ENCODE measurements at regions of chr2 and their contacts with region 1.

Region 1: GRCh38 chr2:25756536-25756935 is 83.2 kb upstream of the DTNB start:
- DNase-seq: no peak
- H3K4me3 Mint-ChIP-seq: no peak overlapping the region
- H3K27ac Mint-ChIP-seq: no peak overlapping the region
- H3K4me1 Mint-ChIP-seq: peaks cover 12% of the 10 kb centered on the region
- H3K27me3 Mint-ChIP-seq: no peaks in the 10 kb centered on the region

Region 2: GRCh38 chr2:25204190-25204838 is 552.2 kb before region 1 on chr2:
- CTCF ChIA-PET with region 1: no interaction called
- intact Hi-C with region 1: no loop called
- DNase-seq: no peak
- H3K4me3 Mint-ChIP-seq: no peak overlapping the region
- H3K27ac Mint-ChIP-seq: no peak overlapping the region
- H3K4me1 Mint-ChIP-seq: peaks cover 15% of the 10 kb centered on the region
- H3K27me3 Mint-ChIP-seq: no peaks in the 10 kb centered on the region

Region 3: GRCh38 chr2:25572638-25573037 is 183.9 kb before region 1 on chr2:
- CTCF ChIA-PET with region 1: no interaction called
- intact Hi-C with region 1: no loop called
- DNase-seq: no peak
- H3K4me3 Mint-ChIP-seq: no peak overlapping the region
- H3K27ac Mint-ChIP-seq: no peak overlapping the region
- H3K4me1 Mint-ChIP-seq: no peaks in the 10 kb centered on the region
- H3K27me3 Mint-ChIP-seq: no peaks in the 10 kb centered on the region

Region 4: GRCh38 chr2:25831746-25832449 is 75.4 kb after region 1 on chr2:
- CTCF ChIA-PET with region 1: no interaction called
- intact Hi-C with region 1: loop called (anchors 1 kb)
- DNase-seq: peak; percentile 36
- H3K4me3 Mint-ChIP-seq: peak overlapping the region; percentile 24
- H3K27ac Mint-ChIP-seq: peak overlapping the region; percentile 90
- H3K4me1 Mint-ChIP-seq: peaks cover 61% of the 10 kb centered on the region
- H3K27me3 Mint-ChIP-seq: no peaks in the 10 kb centered on the region